Naive thymus-derived CD4-positive, alpha-beta T cell (primary cell): ENCODE measurements at regions of chr6 and their contacts with region 1.

Region 1: DNA sequence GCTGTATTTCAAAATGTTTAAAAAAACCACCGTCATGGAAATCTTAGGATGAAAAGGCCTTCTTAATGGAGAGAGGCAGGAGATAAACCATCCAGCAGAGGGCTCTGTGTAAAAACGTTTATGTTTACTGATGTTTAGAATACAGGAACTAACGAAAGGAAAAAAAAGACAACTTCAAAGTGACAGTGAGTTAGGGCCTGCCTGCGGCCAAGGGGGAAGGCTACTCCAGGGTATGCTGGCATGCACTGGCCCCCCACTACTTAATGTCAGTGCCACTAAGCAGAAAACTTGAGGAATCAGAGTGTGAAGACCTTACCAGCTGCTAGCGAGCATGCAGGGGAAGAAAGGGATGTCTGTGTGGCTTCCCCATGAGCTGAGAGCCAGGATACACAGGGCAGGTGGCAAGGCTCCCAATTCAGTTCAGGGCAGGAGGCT is 47.7 kb downstream of the AKAP7 start:
- DNase-seq: peak in 8 of 9 donors; percentile 6 to 57 (median 47)
- ATAC-seq: peak; percentile 83
- H3K4me3 ChIP-seq: no peak overlapping the region
- H3K4me3 Mint-ChIP-seq: peak overlapping the region; percentile 10 to 85 (median 72)
- H3K27ac ChIP-seq: no peak overlapping the region
- H3K27ac Mint-ChIP-seq: peak overlapping the region; percentile 86 to 98 (median 94)
- H3K4me1 ChIP-seq: peaks cover 0 to 8% of the 10 kb centered on the region in 2 donors
- H3K4me1 Mint-ChIP-seq: peaks cover 5 to 22% (median 17%) of the 10 kb centered on the region in 7 donors
- H3K27me3 ChIP-seq: no peaks in the 10 kb centered on the region
- H3K27me3 Mint-ChIP-seq: no peaks in the 10 kb centered on the region

Region 2: GRCh38 chr6:130587778-130588520 is 595.1 kb before region 1 on chr6:
- CTCF ChIA-PET with region 1: no interaction called
- POLR2A ChIA-PET with region 1: no interaction called
- intact Hi-C with region 1: no loop called
- DNase-seq: no peak
- ATAC-seq: no peak
- H3K4me3 ChIP-seq: no peak overlapping the region
- H3K4me3 Mint-ChIP-seq: no peak overlapping the region
- H3K27ac ChIP-seq: no peak overlapping the region
- H3K27ac Mint-ChIP-seq: peak overlapping the region in 1 of 9 donors; percentile 32
- H3K4me1 ChIP-seq: no peaks in the 10 kb centered on the region
- H3K4me1 Mint-ChIP-seq: peaks cover 3 to 41% (median 24%) of the 10 kb centered on the region in 7 donors
- H3K27me3 ChIP-seq: no peaks in the 10 kb centered on the region
- H3K27me3 Mint-ChIP-seq: peaks cover 0 to 3% (median 0%) of the 10 kb centered on the region in 5 donors

Region 3: DNA sequence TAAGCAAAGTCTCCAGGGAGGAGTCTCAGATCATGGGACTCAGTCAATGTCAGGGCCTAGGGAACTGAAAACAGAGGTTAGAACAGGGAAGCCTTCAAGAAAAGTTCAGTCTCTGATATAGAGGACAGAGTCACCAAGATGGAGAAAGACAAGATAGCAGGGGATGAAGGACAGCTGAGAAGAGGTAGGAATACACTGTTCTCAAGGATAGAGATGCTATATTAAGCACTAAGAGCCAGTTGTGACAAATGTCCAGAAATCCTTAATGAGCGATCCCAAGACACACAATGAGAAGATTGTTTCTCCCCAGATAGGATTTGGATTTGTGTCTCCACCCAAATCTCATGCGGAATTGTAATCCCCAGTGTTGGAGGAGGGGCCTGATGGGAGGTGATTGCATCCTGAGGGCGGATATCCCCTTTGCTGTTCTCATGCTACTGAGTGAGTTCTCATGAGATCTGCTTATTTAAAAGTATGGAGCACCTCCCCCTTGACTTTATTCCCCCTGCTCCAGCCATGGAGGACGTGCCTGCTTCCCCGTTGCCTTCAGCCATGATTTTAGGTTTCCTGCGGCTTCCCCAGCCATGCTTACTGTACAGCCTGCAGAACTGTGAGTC is 120.4 kb after region 1 on chr6:
- CTCF ChIA-PET with region 1: no interaction called
- POLR2A ChIA-PET with region 1: no interaction called
- intact Hi-C with region 1: loop called in 1 of 2 experiments (anchors 1 kb)
- DNase-seq: no peak
- ATAC-seq: no peak
- H3K4me3 ChIP-seq: no peak overlapping the region
- H3K4me3 Mint-ChIP-seq: no peak overlapping the region
- H3K27ac ChIP-seq: no peak overlapping the region
- H3K27ac Mint-ChIP-seq: peak overlapping the region in 6 of 9 donors; percentile 2 to 51 (median 28)
- H3K4me1 ChIP-seq: peaks cover 0 to 10% of the 10 kb centered on the region in 2 donors
- H3K4me1 Mint-ChIP-seq: peaks cover 0 to 40% (median 24%) of the 10 kb centered on the region in 7 donors
- H3K27me3 ChIP-seq: no peaks in the 10 kb centered on the region
- H3K27me3 Mint-ChIP-seq: no peaks in the 10 kb centered on the region

Region 4: DNA sequence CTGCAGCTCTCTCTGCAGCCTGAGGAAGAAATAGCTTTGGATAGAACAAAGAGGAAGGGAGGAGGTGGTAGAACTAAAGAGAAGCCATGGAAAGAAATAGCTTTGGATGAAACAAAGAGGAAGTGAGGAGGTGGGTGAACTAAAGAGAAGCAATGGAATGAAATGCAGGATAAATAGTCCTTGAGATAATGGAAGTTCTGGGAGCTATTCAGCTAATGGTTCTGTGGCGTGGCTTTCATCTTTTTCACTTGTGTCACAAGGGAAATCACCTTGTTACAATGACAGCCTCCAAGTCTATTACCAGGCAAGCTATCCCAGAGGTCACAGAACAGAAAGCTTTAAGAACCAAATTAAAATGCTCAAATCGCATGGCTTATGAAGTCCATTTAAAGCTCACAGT is 248.7 kb after region 1 on chr6:
- CTCF ChIA-PET with region 1: no interaction called
- POLR2A ChIA-PET with region 1: no interaction called
- intact Hi-C with region 1: no loop called
- DNase-seq: no peak
- ATAC-seq: no peak
- H3K4me3 ChIP-seq: no peak overlapping the region
- H3K4me3 Mint-ChIP-seq: no peak overlapping the region
- H3K27ac ChIP-seq: no peak overlapping the region
- H3K27ac Mint-ChIP-seq: peak overlapping the region in 1 of 9 donors; percentile 71
- H3K4me1 ChIP-seq: peaks cover 0 to 6% of the 10 kb centered on the region in 2 donors
- H3K4me1 Mint-ChIP-seq: peaks cover 13 to 67% (median 37%) of the 10 kb centered on the region in 7 donors
- H3K27me3 ChIP-seq: no peaks in the 10 kb centered on the region
- H3K27me3 Mint-ChIP-seq: no peaks in the 10 kb centered on the region